ENCODE measurements at regions of chr5 and their contacts with region 1.

Region 1: DNA sequence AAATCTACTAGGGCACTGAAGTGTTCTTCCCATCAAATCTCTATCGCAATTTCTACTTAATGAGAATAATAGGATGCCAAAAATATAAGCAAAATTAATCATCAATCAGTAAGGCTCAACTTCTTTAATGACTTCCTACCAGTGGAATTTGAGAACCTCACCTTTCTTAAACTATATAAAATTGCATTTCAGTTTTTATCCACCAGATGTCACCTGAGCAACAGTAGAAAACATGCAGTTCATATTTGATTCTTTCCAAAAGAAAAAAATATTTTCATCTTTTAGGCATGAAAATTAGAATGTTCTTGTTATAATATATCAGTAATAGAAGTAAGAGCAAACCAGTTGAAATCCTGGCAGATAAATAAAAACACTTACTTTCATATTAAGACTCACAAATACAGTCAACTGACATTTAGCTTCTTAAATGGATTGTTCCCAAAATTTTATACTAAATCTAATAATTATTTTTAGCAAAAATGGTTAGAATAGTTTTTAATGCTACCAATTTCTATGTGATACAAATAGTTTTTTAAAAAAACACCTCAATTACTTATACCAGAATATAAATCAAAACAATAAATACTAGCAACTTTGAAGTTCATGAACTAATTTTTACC is 13.4 kb upstream of the CCDC112 start:
- DNase-seq: peak in 1 of 2 experiments; percentile 38
- ATAC-seq: peak in 1 of 2 experiments; percentile 74; a peak in 3 of 6 replicates
- H3K4me3 ChIP-seq: no peak overlapping the region
- H3K27ac ChIP-seq: no peak overlapping the region
- H3K4me1 ChIP-seq: no peaks in the 10 kb centered on the region
- CTCF ChIP-seq: peak; percentile 78
- EP300 ChIP-seq: no peak
- POLR2A ChIP-seq: no peak
- RAD21 ChIP-seq: peak; percentile 86 to 94

Region 2: DNA sequence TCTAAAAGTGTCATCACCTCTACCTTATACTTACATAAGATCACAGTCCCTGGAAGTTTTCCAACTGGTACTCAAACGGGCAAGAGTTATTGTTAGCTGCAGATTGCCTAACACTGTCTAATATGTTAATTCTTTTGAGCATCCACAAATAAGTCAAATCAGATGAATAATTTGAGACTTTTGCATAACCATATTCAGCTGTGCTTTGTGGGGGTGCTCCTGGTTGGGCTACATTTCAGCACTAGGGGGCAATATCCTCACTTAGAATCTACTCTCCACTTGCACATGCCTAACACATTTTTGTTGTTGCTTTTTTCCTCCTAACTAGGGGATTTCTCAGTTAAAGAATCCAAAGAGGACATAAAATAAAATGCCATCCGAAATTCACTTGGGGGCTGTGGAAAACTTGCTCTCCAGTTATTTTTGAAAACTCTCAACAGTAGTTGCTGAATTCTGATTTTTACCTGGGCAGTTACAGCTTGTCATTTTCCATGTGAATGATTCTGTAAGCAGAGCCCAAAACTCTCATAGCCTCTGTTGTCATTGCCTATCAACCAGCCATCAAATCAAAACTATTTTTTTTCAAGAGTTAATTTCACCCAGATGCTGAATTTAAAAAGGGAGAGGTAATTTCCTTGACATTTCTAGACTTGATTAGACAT is 211.7 kb before region 1 on chr5:
- CTCF ChIA-PET with region 1: interaction called, 10 read pairs
- POLR2A ChIA-PET with region 1: no interaction called
- DNase-seq: peak; percentile 44 to 52
- ATAC-seq: peak; percentile 96 to 97
- H3K4me3 ChIP-seq: no peak overlapping the region
- H3K27ac ChIP-seq: no peak overlapping the region
- H3K4me1 ChIP-seq: peaks cover 8% of the 10 kb centered on the region; the same call in 1 of the 3 replicates
- CTCF ChIP-seq: peak; percentile 82
- EP300 ChIP-seq: no peak
- POLR2A ChIP-seq: no peak
- RAD21 ChIP-seq: peak; percentile 78 to 85

Region 3: DNA sequence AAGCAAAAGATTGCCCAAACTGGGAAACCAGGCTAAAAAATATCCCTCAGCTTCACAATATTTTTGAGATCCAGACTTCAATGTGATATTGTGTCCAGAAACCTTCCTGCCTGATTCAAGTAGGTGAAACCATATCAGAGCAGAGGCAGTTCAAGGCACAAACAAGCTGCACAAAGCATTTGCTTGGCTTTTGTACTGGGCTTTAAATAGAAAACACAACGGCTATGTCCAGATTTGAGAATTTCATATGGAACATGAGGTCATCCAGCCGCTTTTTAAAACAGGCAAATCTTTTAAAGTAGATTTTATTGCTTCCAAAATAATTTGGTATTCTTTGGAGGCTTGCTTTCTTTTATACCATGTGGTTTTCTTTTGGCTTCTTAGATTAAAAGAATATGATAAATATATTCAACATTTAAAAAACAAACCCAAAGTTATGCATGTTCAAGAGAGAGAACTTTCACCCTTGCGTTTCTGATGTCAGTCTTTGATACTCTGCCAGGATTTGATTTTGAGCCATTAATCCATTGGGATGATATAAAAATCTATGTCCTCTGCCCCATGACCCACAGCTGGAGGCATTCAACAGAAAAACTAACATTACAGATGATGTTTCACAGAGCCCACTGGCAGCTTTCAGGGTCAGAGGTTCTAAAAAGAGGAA is 15.6 kb after region 1 on chr5:
- CTCF ChIA-PET with region 1: interaction called, 15 read pairs
- POLR2A ChIA-PET with region 1: no interaction called
- DNase-seq: no peak
- ATAC-seq: no peak
- H3K4me3 ChIP-seq: no peak overlapping the region
- H3K27ac ChIP-seq: no peak overlapping the region
- H3K4me1 ChIP-seq: no peaks in the 10 kb centered on the region
- CTCF ChIP-seq: no peak
- EP300 ChIP-seq: no peak
- POLR2A ChIP-seq: no peak
- RAD21 ChIP-seq: no peak

Region 4: DNA sequence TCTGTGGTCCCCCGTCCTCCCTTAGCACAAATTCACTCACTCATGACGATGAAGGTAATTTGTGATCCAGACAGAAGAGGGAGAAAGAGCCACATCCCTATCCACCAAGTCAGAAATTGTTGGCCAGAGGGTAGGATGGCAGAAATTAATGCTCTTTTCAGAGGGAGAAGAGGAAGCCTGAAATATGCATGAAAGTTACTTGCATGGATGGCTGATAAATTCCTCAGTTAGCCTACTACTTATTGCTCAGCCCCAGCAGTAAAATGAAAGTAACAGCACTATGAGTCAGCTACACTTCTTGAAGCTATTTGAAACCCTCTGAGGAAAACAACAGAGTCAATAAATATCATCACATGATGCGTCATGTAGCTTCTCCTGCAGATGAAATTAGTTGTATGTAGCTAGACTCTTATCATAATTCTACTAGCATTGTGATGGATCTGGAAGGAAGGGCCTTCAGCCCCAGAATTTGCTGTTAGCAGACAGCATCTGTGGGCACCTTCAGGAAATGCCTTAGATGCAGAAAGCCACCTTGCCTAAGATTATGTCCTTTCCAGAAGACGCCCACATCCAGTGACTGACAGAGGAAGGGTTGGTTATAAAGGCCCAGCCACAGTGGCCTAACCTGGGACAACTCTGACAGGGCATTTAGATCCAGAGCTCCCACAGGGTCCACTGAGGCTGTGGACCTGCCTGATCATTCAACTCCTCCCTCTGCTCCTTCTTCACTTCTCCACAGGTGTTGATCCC is 67.8 kb after region 1 on chr5:
- CTCF ChIA-PET with region 1: interaction called, 15 read pairs
- POLR2A ChIA-PET with region 1: no interaction called
- DNase-seq: peak in 1 of 2 experiments; percentile 22
- ATAC-seq: peak; percentile 46 to 71; a peak in 3 of 6 replicates
- H3K4me3 ChIP-seq: no peak overlapping the region
- H3K27ac ChIP-seq: 0 out of 6 replicates have a peak overlapping the region, but pooled peaks of 1 of the 2 experiments have one; percentile 1
- H3K4me1 ChIP-seq: peaks cover 11% of the 10 kb centered on the region; the same call in 2 of the 3 replicates
- CTCF ChIP-seq: peak; percentile 32; the same call in 2 of the 3 replicates
- EP300 ChIP-seq: no peak
- POLR2A ChIP-seq: no peak
- RAD21 ChIP-seq: peak; percentile 52 to 53; a peak in 4 of 5 replicates

Region 5: GRCh38 chr5:115544436-115545350 is 234.8 kb after region 1 on chr5 and contains the start of gene FEM1C:
- CTCF ChIA-PET with region 1: interaction called, 12 read pairs
- POLR2A ChIA-PET with region 1: no interaction called
- DNase-seq: peak; percentile 88 to 97
- ATAC-seq: peak; percentile 98 to 99
- H3K4me3 ChIP-seq: peak within 1 kb of the TSS; percentile 82
- H3K27ac ChIP-seq: peak within 1 kb of the TSS; percentile 94 to 96
- H3K4me1 ChIP-seq: peaks cover 30% of the 10 kb centered on the region; the same call in 2 of the 3 replicates
- CTCF ChIP-seq: no peak
- EP300 ChIP-seq: no peak
- POLR2A ChIP-seq: peak; percentile 91
- RAD21 ChIP-seq: no peak
- polyA plus RNA-seq, gene FEM1C: 7.9 and 8.4 TPM in 2 replicates

Region 6: DNA sequence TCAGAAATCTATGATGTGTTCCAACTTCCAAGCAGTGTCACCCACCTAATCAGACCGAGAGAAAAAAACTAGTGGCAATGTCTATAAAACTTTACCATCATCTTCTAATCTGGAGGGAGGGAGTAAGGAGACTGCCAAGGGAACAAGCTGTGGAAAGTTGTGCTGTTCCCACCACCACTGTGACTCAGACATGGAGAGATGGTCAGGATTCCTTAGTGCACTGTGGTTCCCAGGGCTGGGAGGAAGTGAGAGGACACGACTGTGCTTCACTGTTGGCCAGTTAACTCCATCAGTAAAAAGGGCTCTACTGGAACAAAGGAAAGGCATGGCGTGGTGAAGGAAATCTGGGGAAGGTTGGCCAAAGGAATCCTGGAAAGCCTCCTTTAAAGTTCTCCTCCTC is 273.6 kb after region 1 on chr5:
- CTCF ChIA-PET with region 1: interaction called, 156 read pairs
- POLR2A ChIA-PET with region 1: no interaction called
- DNase-seq: no peak
- ATAC-seq: no peak
- H3K4me3 ChIP-seq: no peak overlapping the region
- H3K27ac ChIP-seq: no peak overlapping the region
- H3K4me1 ChIP-seq: peaks cover 10% of the 10 kb centered on the region; the same call in 2 of the 3 replicates
- CTCF ChIP-seq: no peak
- EP300 ChIP-seq: no peak
- POLR2A ChIP-seq: no peak
- RAD21 ChIP-seq: no peak

Region 7: DNA sequence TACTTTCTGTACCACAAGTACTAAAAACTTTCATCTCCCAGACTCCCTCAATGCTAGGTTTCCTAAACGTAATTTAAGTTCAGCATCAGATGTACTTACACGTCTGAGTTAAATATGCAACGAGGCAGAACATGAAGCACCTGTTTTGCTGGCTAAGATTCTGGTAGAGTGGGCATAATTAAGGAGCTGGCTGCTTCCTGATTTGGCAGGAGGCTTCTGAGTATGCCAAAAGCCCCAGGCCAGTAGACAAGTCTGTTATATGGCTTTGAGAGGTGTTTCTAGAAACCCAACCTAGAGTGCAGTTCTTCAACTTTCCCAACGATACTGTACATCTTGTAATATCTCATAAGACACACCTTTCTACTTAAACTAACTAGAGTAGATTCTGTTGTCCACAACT is 278.8 kb after region 1 on chr5:
- CTCF ChIA-PET with region 1: interaction called, 59 read pairs
- POLR2A ChIA-PET with region 1: no interaction called
- DNase-seq: no peak
- ATAC-seq: no peak
- H3K4me3 ChIP-seq: no peak overlapping the region
- H3K27ac ChIP-seq: no peak overlapping the region
- H3K4me1 ChIP-seq: no peaks in the 10 kb centered on the region
- CTCF ChIP-seq: no peak
- EP300 ChIP-seq: no peak
- POLR2A ChIP-seq: no peak
- RAD21 ChIP-seq: no peak